ENCODE measurements at regions of chr5 and their contacts with region 1.

Region 1: DNA sequence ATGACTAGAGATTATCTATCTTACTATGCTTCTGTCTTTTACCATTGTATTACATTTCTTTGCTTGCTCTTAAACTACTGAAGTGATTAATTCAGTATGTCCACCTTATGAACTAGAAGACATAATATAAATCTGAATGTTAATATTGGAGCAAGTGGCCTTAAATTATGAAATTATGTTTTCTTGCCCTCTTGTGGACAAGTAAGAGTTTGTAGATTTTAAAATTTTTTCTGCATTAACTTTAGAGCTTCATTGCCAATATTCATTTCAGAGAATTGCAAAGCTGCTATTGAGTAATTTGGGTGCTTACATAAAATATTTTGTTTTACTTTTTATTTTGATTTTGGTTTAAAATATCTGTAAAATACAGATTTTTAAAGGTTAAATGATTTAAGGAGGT is 55.3 kb downstream of the RANBP17 start:
- DNase-seq: no peak
- H3K4me3 ChIP-seq: no peak overlapping the region
- H3K27ac ChIP-seq: no peak overlapping the region
- H3K27me3 ChIP-seq: no peaks in the 10 kb centered on the region
- CTCF ChIP-seq: peak; percentile 36

Region 2: GRCh38 chr5:170747851-170748250 is 169.3 kb before region 1 on chr5:
- CTCF ChIA-PET with region 1: interaction called, 10 read pairs
- POLR2A ChIA-PET with region 1: no interaction called
- DNase-seq: no peak
- H3K4me3 ChIP-seq: no peak overlapping the region
- H3K27ac ChIP-seq: no peak overlapping the region
- H3K27me3 ChIP-seq: peaks cover 18% of the 10 kb centered on the region
- CTCF ChIP-seq: peak; percentile 46

Region 3: GRCh38 chr5:170809551-170809950 is 107.6 kb before region 1 on chr5:
- CTCF ChIA-PET with region 1: interaction called, 15 read pairs
- POLR2A ChIA-PET with region 1: no interaction called
- DNase-seq: peak; percentile 27
- H3K4me3 ChIP-seq: no peak overlapping the region
- H3K27ac ChIP-seq: no peak overlapping the region
- H3K27me3 ChIP-seq: no peaks in the 10 kb centered on the region
- CTCF ChIP-seq: peak; percentile 57

Measured in AG04450 (cell line).